GM12878 (cell line): ENCODE measurements at regions of chr2 and their contacts with region 1.

Region 1: GRCh38 chr2:57759822-57760300 is 286.7 kb upstream of the VRK2 start:
- DNase-seq: peak; percentile 48
- ATAC-seq: peak; percentile 97
- H3K4me3 ChIP-seq: peak overlapping the region; percentile 58; the same call in 1 of the 2 replicates
- H3K27ac ChIP-seq: peak overlapping the region; percentile 73
- H3K4me1 ChIP-seq: peaks cover 24% of the 10 kb centered on the region; the same call in 1 of the 2 replicates
- H3K27me3 ChIP-seq: no peaks in the 10 kb centered on the region
- CTCF ChIP-seq: peak; percentile 90 to 93 (median 91)
- EP300 ChIP-seq: no peak
- POLR2A ChIP-seq: no peak
- RAD21 ChIP-seq: peak; percentile 93

Region 2: DNA sequence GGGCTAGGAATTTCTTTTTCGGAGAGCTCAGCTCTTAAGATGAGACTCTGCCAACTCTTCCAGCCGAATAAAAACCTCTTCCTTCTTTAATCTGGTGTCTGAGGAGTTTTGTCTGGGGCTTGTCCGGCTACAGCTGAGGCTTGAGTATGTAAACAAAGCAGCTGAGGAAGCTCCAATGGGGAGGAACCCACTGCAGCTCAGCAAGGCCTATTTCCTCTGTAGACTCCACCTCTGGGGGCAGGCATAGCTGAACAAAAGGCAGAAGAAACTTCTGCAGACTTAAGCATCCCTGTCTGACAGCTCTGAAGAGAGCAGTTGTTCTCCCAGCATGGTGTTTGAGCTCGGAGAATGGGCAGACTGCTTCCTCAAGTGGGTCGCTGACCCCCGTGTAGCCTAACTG is 737.4 kb before region 1 on chr2:
- CTCF ChIA-PET with region 1: no interaction called
- POLR2A ChIA-PET with region 1: no interaction called
- RAD21 ChIA-PET with region 1: no interaction called
- SMC1A ChIA-PET with region 1: no interaction called
- in situ Hi-C with region 1: no loop called
- intact Hi-C with region 1: no loop called
- DNase-seq: no peak
- ATAC-seq: no peak
- H3K4me3 ChIP-seq: no peak overlapping the region
- H3K27ac ChIP-seq: no peak overlapping the region
- H3K4me1 ChIP-seq: no peaks in the 10 kb centered on the region
- H3K27me3 ChIP-seq: no peaks in the 10 kb centered on the region
- CTCF ChIP-seq: no peak
- EP300 ChIP-seq: no peak
- POLR2A ChIP-seq: no peak
- RAD21 ChIP-seq: no peak

Region 3: GRCh38 chr2:57726294-57726693 is 33.6 kb before region 1 on chr2:
- CTCF ChIA-PET with region 1: interaction called, 12 read pairs
- POLR2A ChIA-PET with region 1: no interaction called
- RAD21 ChIA-PET with region 1: interaction called, 10 read pairs
- SMC1A ChIA-PET with region 1: interaction called, 12 read pairs
- in situ Hi-C with region 1: no loop called
- intact Hi-C with region 1: loop called (anchors 1 kb)
- DNase-seq: peak; percentile 5
- ATAC-seq: peak; percentile 80
- H3K4me3 ChIP-seq: no peak overlapping the region
- H3K27ac ChIP-seq: no peak overlapping the region
- H3K4me1 ChIP-seq: no peaks in the 10 kb centered on the region
- H3K27me3 ChIP-seq: no peaks in the 10 kb centered on the region
- CTCF ChIP-seq: no peak
- EP300 ChIP-seq: no peak
- POLR2A ChIP-seq: no peak
- RAD21 ChIP-seq: no peak

Region 4: GRCh38 chr2:57809230-57809629 is 49.4 kb after region 1 on chr2:
- CTCF ChIA-PET with region 1: interaction called, 15 read pairs
- POLR2A ChIA-PET with region 1: interaction called, 3 read pairs
- RAD21 ChIA-PET with region 1: interaction called, 4 read pairs
- SMC1A ChIA-PET with region 1: interaction called, 8 read pairs
- in situ Hi-C with region 1: no loop called
- intact Hi-C with region 1: no loop called
- DNase-seq: peak; percentile 37
- ATAC-seq: peak; percentile 92
- H3K4me3 ChIP-seq: no peak overlapping the region
- H3K27ac ChIP-seq: peak overlapping the region; percentile 62
- H3K4me1 ChIP-seq: peaks cover 8% of the 10 kb centered on the region; the same call in 1 of the 2 replicates
- H3K27me3 ChIP-seq: no peaks in the 10 kb centered on the region
- CTCF ChIP-seq: no peak
- EP300 ChIP-seq: no peak
- POLR2A ChIP-seq: no peak
- RAD21 ChIP-seq: no peak

Region 5: GRCh38 chr2:58046585-58047372 is 286.9 kb after region 1 on chr2 and contains the start of gene VRK2:
- CTCF ChIA-PET with region 1: no interaction called
- POLR2A ChIA-PET with region 1: no interaction called
- RAD21 ChIA-PET with region 1: interaction called, 3 read pairs
- SMC1A ChIA-PET with region 1: interaction called, 3 read pairs
- in situ Hi-C with region 1: no loop called
- intact Hi-C with region 1: loop called (anchors 2 kb)
- DNase-seq: peak; percentile 87
- ATAC-seq: peak; percentile 83
- H3K4me3 ChIP-seq: peak within 1 kb of the TSS; percentile 69
- H3K27ac ChIP-seq: peak within 1 kb of the TSS; percentile 92
- H3K4me1 ChIP-seq: peaks cover 15% of the 10 kb centered on the region; the same call in 1 of the 2 replicates
- H3K27me3 ChIP-seq: no peaks in the 10 kb centered on the region
- CTCF ChIP-seq: 0 out of 6 replicates have a peak, but pooled peaks of 2 of the 3 experiments have one; percentile 3 to 4
- EP300 ChIP-seq: peak in 1 of 2 experiments; percentile 54; a peak in 2 of 4 replicates
- POLR2A ChIP-seq: peak; percentile 92
- RAD21 ChIP-seq: peak; percentile 26; the same call in 1 of the 2 replicates
- polyA plus RNA-seq, gene VRK2: 26.5 to 32.1 TPM

Region 6: DNA sequence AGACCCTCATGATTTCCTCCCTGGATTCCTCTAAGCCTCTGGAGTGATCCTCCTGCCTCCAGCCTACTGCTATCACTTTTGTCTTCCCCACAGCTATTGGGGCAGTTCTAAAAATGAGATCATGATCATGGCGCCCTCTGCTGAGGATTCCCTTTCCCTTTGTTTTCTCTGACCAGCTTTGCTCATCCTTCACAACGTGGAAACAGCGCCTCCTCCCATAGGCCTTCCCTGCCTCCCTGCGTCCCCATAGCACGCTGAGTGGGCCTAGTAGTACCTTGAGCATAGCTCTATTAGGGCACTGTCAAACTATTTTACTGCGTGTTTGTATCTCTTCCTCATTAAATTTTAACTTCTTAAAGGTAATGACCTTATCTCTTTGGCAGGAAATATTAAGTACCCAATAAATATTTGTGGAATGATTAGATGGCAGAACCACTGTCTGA is 688.2 kb after region 1 on chr2:
- CTCF ChIA-PET with region 1: interaction called, 23 read pairs
- POLR2A ChIA-PET with region 1: interaction called, 3 read pairs
- RAD21 ChIA-PET with region 1: interaction called, 15 read pairs
- SMC1A ChIA-PET with region 1: interaction called, 16 read pairs
- in situ Hi-C with region 1: loop called (anchors 5 kb)
- intact Hi-C with region 1: loop called (anchors 1 kb)
- DNase-seq: peak; percentile 46
- ATAC-seq: peak; percentile 67
- H3K4me3 ChIP-seq: no peak overlapping the region
- H3K27ac ChIP-seq: no peak overlapping the region
- H3K4me1 ChIP-seq: no peaks in the 10 kb centered on the region
- H3K27me3 ChIP-seq: no peaks in the 10 kb centered on the region
- CTCF ChIP-seq: peak; percentile 50 to 77 (median 57); a peak in 5 of 6 replicates
- EP300 ChIP-seq: no peak
- POLR2A ChIP-seq: no peak
- RAD21 ChIP-seq: peak; percentile 68